ENCODE measurements at regions of chr15 and their contacts with region 1.

Region 1: GRCh38 chr15:78108299-78109084 is 16.1 kb downstream of the SH2D7 start:
- DNase-seq: peak; percentile 63 to 80
- ATAC-seq: peak; percentile 82 to 89
- H3K4me3 ChIP-seq: no peak overlapping the region
- H3K27ac ChIP-seq: no peak overlapping the region
- H3K4me1 ChIP-seq: no peaks in the 10 kb centered on the region
- H3K27me3 ChIP-seq: no peaks in the 10 kb centered on the region
- CTCF ChIP-seq: peak; percentile 95 to 97 (median 95)
- POLR2A ChIP-seq: no peak

Region 2: DNA sequence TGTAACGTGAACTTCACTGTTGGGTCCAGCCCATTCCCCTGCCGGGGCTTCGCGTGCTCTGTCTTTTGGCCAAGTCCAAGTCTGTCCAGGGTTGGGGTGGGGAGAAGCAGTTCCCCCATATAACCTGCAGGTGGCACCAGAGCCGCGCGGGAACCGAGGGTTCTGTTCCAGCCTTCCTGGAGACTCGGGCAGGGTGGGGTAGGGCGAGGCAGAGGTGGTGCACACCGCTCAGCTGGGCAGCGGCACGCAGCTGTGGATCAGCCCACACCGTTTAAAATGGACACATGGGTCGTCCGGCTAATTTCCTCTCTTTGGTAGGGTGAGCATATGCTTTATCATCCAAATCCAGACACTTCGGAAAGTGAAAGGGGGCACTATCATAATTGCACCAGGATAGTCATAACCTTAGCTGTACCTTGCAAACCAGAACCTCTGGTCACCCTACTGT is 149.0 kb before region 1 on chr15:
- in situ Hi-C with region 1: loop called in 1 of 4 experiments (anchors 5 kb)
- intact Hi-C with region 1: loop called (anchors 1 kb)
- DNase-seq: peak; percentile 49 to 71
- ATAC-seq: peak; percentile 89 to 98
- H3K4me3 ChIP-seq: peak overlapping the region; percentile 21 to 50 (median 30)
- H3K27ac ChIP-seq: no peak overlapping the region
- H3K4me1 ChIP-seq: peaks cover 0 to 9% of the 10 kb centered on the region in 2 donors
- H3K27me3 ChIP-seq: no peaks in the 10 kb centered on the region
- CTCF ChIP-seq: peak; percentile 91 to 99 (median 95)
- POLR2A ChIP-seq: no peak

Region 3: GRCh38 chr15:77992356-77993222 is 115.9 kb before region 1 on chr15:
- in situ Hi-C with region 1: loop called in 1 of 4 experiments (anchors 10 kb)
- intact Hi-C with region 1: no loop called
- DNase-seq: peak in 1 of 2 donors; percentile 57
- ATAC-seq: peak; percentile 9 to 29
- H3K4me3 ChIP-seq: no peak overlapping the region
- H3K27ac ChIP-seq: peak overlapping the region; percentile 87 to 95 (median 90)
- H3K4me1 ChIP-seq: peaks cover 51 to 54% of the 10 kb centered on the region in 2 donors
- H3K27me3 ChIP-seq: no peaks in the 10 kb centered on the region
- CTCF ChIP-seq: no peak
- POLR2A ChIP-seq: no peak

Region 4: GRCh38 chr15:78195735-78196201 is 87.3 kb after region 1 on chr15:
- in situ Hi-C with region 1: loop called in 3 of 4 experiments (anchors 10 kb)
- intact Hi-C with region 1: loop called (anchors 1 kb)
- DNase-seq: no peak
- ATAC-seq: peak; percentile 67 to 77
- H3K4me3 ChIP-seq: no peak overlapping the region
- H3K27ac ChIP-seq: no peak overlapping the region
- H3K4me1 ChIP-seq: no peaks in the 10 kb centered on the region
- H3K27me3 ChIP-seq: no peaks in the 10 kb centered on the region
- CTCF ChIP-seq: peak; percentile 72 to 81 (median 77)
- POLR2A ChIP-seq: no peak

Region 5: GRCh38 chr15:78241007-78241406 is 132.5 kb after region 1 on chr15:
- in situ Hi-C with region 1: loop called (anchors 5 kb)
- intact Hi-C with region 1: loop called (anchors 1 kb)
- DNase-seq: peak; percentile 66 to 80
- ATAC-seq: peak; percentile 84 to 93
- H3K4me3 ChIP-seq: no peak overlapping the region
- H3K27ac ChIP-seq: no peak overlapping the region
- H3K4me1 ChIP-seq: peaks cover 0 to 7% of the 10 kb centered on the region in 2 donors
- H3K27me3 ChIP-seq: no peaks in the 10 kb centered on the region
- CTCF ChIP-seq: peak; percentile 84 to 94 (median 91)
- POLR2A ChIP-seq: no peak

Region 6: DNA sequence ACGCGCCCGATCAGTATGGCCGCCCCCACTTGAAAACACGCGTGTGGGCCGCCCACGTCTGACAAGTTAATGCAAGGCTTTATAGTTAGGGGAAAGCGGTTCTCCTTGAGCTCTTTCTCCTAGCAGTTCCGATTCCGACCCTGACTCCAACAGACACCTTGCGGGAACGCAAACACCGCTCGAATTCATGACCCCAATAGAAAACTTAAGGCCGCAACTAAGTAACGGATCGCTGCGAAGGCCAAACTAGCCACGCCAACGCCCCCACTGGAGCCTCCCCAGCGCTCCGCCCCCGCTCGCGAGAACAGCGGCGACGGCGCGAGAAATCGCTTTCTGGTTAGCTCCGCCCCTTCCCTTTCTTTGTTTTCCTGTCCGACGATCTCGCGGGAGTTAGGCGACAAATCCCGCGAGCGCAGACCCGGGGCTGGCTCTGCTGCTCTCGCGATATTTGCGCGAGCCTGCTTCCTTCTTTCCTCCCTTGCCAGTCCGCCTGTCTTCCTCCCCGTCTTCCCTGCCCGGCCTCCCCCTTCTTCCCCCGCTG is 329.3 kb after region 1 on chr15 and contains the start of gene IREB2:
- in situ Hi-C with region 1: loop called in 1 of 4 experiments (anchors 25 kb)
- intact Hi-C with region 1: no loop called
- DNase-seq: peak; percentile 96 to 97
- ATAC-seq: peak; percentile 92 to 94
- H3K4me3 ChIP-seq: peak within 1 kb of the TSS; percentile 81 to 100 (median 92)
- H3K27ac ChIP-seq: peak within 1 kb of the TSS; percentile 96 to 100 (median 98)
- H3K4me1 ChIP-seq: peaks cover 40 to 50% of the 10 kb centered on the region in 2 donors
- H3K27me3 ChIP-seq: no peaks in the 10 kb centered on the region
- CTCF ChIP-seq: peak in 1 of 5 experiments; percentile 24
- POLR2A ChIP-seq: peak; percentile 45 to 54
- total RNA-seq, gene IREB2: 18.9 to 37.4 (median 22.0) TPM

Measured in gastrocnemius medialis (tissue), 4 donors.